CD14-positive monocyte (primary cell): ENCODE measurements at regions of chr1 and their contacts with region 1.

Region 1: GRCh38 chr1:63615768-63616420 is 22.7 kb downstream of the PGM1 start:
- DNase-seq: peak; percentile 60 to 74 (median 65)
- H3K4me3 ChIP-seq: no peak overlapping the region
- H3K4me3 Mint-ChIP-seq: no peak overlapping the region
- H3K27ac ChIP-seq: no peak overlapping the region
- H3K27ac Mint-ChIP-seq: no peak overlapping the region
- H3K4me1 ChIP-seq: peaks cover 7 to 9% of the 10 kb centered on the region in 2 donors
- H3K4me1 Mint-ChIP-seq: peaks cover 25% of the 10 kb centered on the region
- H3K27me3 ChIP-seq: no peaks in the 10 kb centered on the region
- H3K27me3 Mint-ChIP-seq: peaks cover 0 to 1% (median 0%) of the 10 kb centered on the region in 3 donors
- CTCF ChIP-seq: peak; percentile 87

Region 2: DNA sequence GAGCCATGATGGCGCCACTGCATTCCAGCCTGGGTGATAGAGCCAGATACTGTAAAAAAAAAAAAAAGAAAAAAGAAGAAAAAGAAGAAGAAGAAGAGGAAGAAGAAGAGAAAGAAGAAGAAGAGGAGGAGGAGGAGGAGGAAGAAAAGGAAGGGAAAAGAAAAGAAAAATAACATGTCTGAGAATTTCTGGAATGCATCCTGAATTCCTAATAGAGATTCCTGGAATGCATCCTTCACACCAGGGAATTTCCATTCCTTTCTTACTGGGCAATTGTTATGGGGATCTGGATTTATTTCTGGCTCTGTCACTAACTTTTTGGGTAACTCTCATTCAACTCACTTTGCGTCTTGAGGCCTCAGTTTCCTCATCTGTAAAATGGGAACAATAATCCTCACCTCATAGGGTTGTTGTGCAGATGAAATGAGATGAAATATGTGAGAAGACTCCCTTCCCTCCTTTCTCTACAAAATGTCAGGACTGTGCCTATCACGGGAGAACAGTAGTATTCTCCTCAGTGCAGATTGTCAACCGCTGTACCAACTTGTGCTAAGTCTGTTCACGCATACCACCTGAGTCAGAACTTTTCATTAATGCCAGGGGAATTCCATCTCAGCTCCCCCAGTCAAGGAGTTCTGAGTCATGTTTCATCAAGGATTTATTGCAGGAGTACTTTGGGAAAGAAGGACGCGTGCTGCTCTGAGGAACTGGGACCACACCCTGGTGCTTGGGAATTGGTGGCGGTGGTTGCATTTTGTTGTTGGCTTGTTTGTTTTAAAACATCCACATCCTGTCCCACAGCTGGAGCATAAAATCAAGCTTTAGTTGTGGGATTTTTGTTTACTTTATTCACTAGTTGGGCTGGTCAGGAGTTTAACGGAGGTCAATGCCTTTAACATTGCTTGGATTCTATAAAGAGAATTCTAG is 115.5 kb after region 1 on chr1:
- intact Hi-C with region 1: no loop called
- DNase-seq: no peak
- H3K4me3 ChIP-seq: no peak overlapping the region
- H3K4me3 Mint-ChIP-seq: peak overlapping the region in 1 of 2 donors; percentile 61
- H3K27ac ChIP-seq: no peak overlapping the region
- H3K27ac Mint-ChIP-seq: no peak overlapping the region
- H3K4me1 ChIP-seq: no peaks in the 10 kb centered on the region
- H3K4me1 Mint-ChIP-seq: peaks cover 8% of the 10 kb centered on the region
- H3K27me3 ChIP-seq: no peaks in the 10 kb centered on the region
- H3K27me3 Mint-ChIP-seq: peaks cover 4 to 7% (median 4%) of the 10 kb centered on the region in 3 donors
- CTCF ChIP-seq: no peak

Region 3: DNA sequence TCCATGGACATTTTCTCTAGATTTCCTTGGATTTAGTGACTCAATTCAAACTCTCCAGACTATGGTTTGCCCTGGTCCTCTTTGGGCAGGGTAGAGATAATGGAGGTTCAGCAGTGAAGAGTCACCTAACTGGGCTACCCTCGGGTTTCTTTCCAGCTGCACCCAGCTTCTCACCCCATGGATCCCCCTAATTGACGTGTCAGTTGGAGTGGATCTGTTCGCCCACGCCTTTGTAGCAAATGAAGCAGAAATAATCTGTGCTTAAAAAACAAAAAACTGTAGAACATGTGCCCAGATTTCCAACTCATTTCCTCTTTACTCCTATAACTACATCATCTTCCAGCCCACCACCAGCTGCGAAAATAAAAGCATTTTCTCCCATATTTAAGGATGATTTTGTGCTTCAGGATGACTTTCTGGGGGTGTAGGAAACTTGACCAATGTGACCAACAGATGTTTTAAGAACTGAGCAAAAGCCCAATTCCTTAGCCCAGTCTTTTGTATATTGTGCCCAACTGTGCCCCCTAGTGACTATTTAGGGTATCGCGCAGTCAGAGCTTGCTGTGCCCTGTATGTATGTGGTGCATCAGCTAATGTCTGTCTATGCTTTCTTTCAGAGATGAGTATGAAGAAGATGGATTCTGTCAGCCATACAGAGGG is 521.0 kb after region 1 on chr1:
- intact Hi-C with region 1: loop called (anchors 2 kb)
- DNase-seq: peak; percentile 31 to 52 (median 43)
- H3K4me3 ChIP-seq: no peak overlapping the region
- H3K4me3 Mint-ChIP-seq: no peak overlapping the region
- H3K27ac ChIP-seq: no peak overlapping the region
- H3K27ac Mint-ChIP-seq: no peak overlapping the region
- H3K4me1 ChIP-seq: no peaks in the 10 kb centered on the region
- H3K4me1 Mint-ChIP-seq: no peaks in the 10 kb centered on the region
- H3K27me3 ChIP-seq: no peaks in the 10 kb centered on the region
- H3K27me3 Mint-ChIP-seq: peaks cover 0 to 3% (median 1%) of the 10 kb centered on the region in 3 donors
- CTCF ChIP-seq: peak; percentile 91

Region 4: GRCh38 chr1:64246294-64246917 is 630.5 kb after region 1 on chr1:
- intact Hi-C with region 1: loop called (anchors 2 to 5 kb)
- DNase-seq: peak; percentile 6 to 42 (median 27)
- H3K4me3 ChIP-seq: no peak overlapping the region
- H3K4me3 Mint-ChIP-seq: no peak overlapping the region
- H3K27ac ChIP-seq: no peak overlapping the region
- H3K27ac Mint-ChIP-seq: no peak overlapping the region
- H3K4me1 ChIP-seq: peaks cover 6 to 11% of the 10 kb centered on the region in 2 donors
- H3K4me1 Mint-ChIP-seq: peaks cover 14% of the 10 kb centered on the region
- H3K27me3 ChIP-seq: no peaks in the 10 kb centered on the region
- H3K27me3 Mint-ChIP-seq: peaks cover 0 to 12% (median 7%) of the 10 kb centered on the region in 3 donors
- CTCF ChIP-seq: peak; percentile 85